ENCODE measurements at regions of chr9 and their contacts with region 1.

Region 1: DNA sequence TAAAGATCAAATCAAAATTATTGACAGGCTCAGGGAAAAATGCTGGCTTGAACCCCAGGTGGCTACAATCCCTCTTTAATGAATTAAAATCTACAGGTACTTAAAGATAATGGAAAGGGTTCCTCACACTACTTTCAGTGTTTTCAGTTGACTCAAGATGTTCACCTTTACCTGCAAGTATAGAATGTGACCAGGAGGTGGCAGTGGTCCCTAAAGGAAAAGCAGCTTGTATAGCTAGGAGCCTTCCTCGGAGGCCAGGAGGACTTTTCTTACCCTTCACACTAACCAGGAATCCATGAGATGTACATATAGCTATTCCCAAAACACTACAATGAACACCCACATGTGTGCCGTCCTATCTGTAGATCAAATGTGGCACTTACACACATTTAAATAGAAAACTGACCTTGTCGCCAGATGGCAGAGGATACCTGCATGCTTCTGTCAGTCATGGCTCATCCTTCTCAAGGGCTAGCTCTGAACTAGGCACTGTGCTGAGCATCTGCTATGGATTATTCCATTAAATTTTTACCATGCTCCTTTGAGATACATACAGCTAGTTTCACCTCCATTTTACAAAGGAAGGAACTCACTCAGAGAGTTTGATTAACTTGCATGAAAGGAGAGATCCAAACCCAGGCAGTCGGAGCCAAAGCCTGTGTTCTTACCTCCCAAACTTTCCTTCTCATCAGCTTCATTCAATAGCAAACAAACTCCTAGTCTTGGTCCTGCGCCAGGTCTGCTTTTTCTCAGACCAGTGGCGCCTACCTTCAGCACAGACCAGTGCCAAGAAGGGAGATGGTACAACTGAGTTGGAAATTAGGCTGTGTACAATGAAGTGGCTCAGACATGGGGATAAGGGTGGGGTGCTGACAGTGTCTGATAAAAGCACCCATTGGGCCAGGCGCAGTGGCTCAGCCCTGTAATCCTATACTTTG is 24.5 kb downstream of the C9orf152 start:
- DNase-seq: peak in 4 of 5 donors; percentile 72 to 91 (median 82)
- H3K4me3 ChIP-seq: no peak overlapping the region
- H3K27ac ChIP-seq: no peak overlapping the region
- H3K4me1 ChIP-seq: no peaks in the 10 kb centered on the region
- H3K27me3 ChIP-seq: no peaks in the 10 kb centered on the region
- CTCF ChIP-seq: peak; percentile 79

Region 2: DNA sequence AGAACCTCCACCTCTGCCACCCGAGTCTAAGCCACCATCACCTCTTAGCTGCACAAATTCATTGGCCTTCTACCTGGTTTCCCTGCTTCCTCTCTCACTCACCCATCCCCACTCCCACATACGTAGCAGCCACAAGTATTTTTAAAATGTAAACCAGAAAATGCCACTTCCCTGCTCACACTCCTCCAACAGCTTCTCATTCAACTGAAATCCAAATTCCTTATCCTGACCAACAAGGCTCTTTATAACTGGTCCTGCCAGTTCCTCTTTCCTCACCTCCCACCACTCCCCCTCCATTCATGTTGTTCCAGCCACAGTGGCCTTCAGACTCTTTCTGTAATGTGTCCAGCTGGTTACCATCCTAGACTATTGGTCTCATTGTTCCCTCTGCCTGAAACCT is 428.4 kb before region 1 on chr9:
- intact Hi-C with region 1: no loop called
- DNase-seq: no peak
- H3K4me3 ChIP-seq: no peak overlapping the region
- H3K27ac ChIP-seq: no peak overlapping the region
- H3K4me1 ChIP-seq: no peaks in the 10 kb centered on the region
- H3K27me3 ChIP-seq: no peaks in the 10 kb centered on the region
- CTCF ChIP-seq: no peak

Region 3: GRCh38 chr9:110217656-110218099 is 34.2 kb after region 1 on chr9:
- intact Hi-C with region 1: loop called (anchors 5 kb)
- DNase-seq: peak in 2 of 5 donors; percentile 38 to 43
- H3K4me3 ChIP-seq: no peak overlapping the region
- H3K27ac ChIP-seq: no peak overlapping the region
- H3K4me1 ChIP-seq: no peaks in the 10 kb centered on the region
- H3K27me3 ChIP-seq: no peaks in the 10 kb centered on the region
- CTCF ChIP-seq: peak; percentile 73

Region 4: DNA sequence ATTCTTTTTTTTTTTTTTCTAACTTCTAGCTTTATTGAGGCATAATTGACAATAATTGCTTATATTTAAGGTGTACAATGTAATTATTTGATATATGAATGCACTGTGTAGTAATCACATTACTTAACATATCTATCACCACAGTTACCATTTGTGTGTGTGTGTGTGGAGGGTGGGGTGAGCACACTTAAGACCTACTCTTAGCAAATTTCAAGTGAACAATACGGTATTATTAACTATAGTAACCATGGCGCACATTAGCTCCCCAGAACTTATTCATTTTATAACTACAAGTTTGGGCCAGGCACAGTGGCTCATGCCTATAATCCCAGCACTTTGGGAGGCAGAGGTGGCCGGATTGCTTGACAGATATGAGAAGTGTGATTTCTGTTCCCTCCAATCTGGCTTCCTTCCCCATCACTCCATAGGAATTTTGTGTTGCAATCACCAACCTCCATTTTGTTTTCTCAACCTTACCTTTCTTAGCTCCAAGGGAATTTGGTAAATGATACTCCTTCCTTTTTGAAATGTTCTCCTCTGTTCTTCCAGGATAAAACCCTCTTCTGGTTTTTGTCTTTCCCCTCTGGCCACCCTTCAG is 57.9 kb after region 1 on chr9:
- intact Hi-C with region 1: no loop called
- DNase-seq: no peak
- H3K4me3 ChIP-seq: no peak overlapping the region
- H3K27ac ChIP-seq: no peak overlapping the region
- H3K4me1 ChIP-seq: no peaks in the 10 kb centered on the region
- H3K27me3 ChIP-seq: no peaks in the 10 kb centered on the region
- CTCF ChIP-seq: no peak

Measured in kidney (tissue), 22 donors.